Activated CD4-positive, alpha-beta memory T cell treated with anti-CD3 and anti-CD28 coated beads for 36 hours (primary cell): ENCODE measurements at regions of chr1 and their contacts with region 1.

Region 1: GRCh38 chr1:23619299-23620188 is 60.2 kb upstream of the ID3 start:
- DNase-seq: peak; percentile 90
- H3K4me3 Mint-ChIP-seq: peak overlapping the region; percentile 67
- H3K27ac Mint-ChIP-seq: peak overlapping the region; percentile 76
- H3K4me1 Mint-ChIP-seq: peaks cover 76% of the 10 kb centered on the region
- H3K27me3 Mint-ChIP-seq: no peaks in the 10 kb centered on the region

Region 2: GRCh38 chr1:23598424-23598823 is 21.1 kb before region 1 on chr1:
- CTCF ChIA-PET with region 1: interaction called, 16 read pairs
- POLR2A ChIA-PET with region 1: interaction called, 6 read pairs
- intact Hi-C with region 1: no loop called
- DNase-seq: no peak
- H3K4me3 Mint-ChIP-seq: no peak overlapping the region
- H3K27ac Mint-ChIP-seq: no peak overlapping the region
- H3K4me1 Mint-ChIP-seq: peaks cover 71% of the 10 kb centered on the region
- H3K27me3 Mint-ChIP-seq: no peaks in the 10 kb centered on the region

Region 3: DNA sequence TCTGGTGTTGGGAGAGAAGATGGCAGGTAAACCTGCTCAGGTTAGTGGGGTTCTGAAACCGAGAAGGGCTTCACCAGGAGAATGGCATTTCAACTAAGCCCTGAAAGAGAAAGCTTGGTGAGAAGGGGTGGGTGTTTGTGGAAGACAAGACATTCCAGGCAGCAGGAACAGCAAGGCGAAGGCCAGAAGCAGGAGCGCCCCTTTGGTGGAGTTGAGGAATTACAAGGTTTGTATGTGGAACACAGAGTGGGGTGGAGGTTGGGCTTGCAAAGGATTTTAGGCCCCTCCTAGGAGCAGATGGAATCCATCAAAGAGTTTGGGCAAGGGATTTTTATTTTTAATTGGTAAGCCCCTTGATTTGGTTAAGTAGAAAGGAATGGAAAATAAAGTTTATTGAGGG is 98.9 kb after region 1 on chr1:
- CTCF ChIA-PET with region 1: no interaction called
- POLR2A ChIA-PET with region 1: no interaction called
- intact Hi-C with region 1: no loop called
- DNase-seq: no peak
- H3K4me3 Mint-ChIP-seq: no peak overlapping the region
- H3K27ac Mint-ChIP-seq: no peak overlapping the region
- H3K4me1 Mint-ChIP-seq: peaks cover 24% of the 10 kb centered on the region
- H3K27me3 Mint-ChIP-seq: no peaks in the 10 kb centered on the region